Naive thymus-derived CD4-positive, alpha-beta T cell (primary cell): ENCODE measurements at regions of chr17 and their contacts with region 1.

Region 1: GRCh38 chr17:63919311-63919723 is 678 bp upstream of the GH1 start:
- DNase-seq: peak; percentile 53 to 81 (median 68)
- ATAC-seq: peak; percentile 97
- H3K4me3 ChIP-seq: no peak overlapping the region
- H3K4me3 Mint-ChIP-seq: no peak overlapping the region
- H3K27ac ChIP-seq: no peak overlapping the region
- H3K27ac Mint-ChIP-seq: peak overlapping the region in 8 of 9 donors; percentile 3 to 86 (median 8)
- H3K4me1 ChIP-seq: peaks cover 0 to 4% of the 10 kb centered on the region in 2 donors
- H3K4me1 Mint-ChIP-seq: peaks cover 5 to 10% (median 9%) of the 10 kb centered on the region in 7 donors
- H3K27me3 ChIP-seq: no peaks in the 10 kb centered on the region
- H3K27me3 Mint-ChIP-seq: peaks cover 0 to 16% (median 0%) of the 10 kb centered on the region in 5 donors

Region 2: GRCh38 chr17:63931099-63931561 is 11.8 kb after region 1 on chr17:
- CTCF ChIA-PET with region 1: interaction called, 20 read pairs
- POLR2A ChIA-PET with region 1: interaction called, 4 read pairs
- intact Hi-C with region 1: no loop called
- DNase-seq: peak; percentile 29 to 56 (median 48)
- ATAC-seq: peak; percentile 82
- H3K4me3 ChIP-seq: peak overlapping the region; percentile 85
- H3K4me3 Mint-ChIP-seq: peak overlapping the region; percentile 88 to 99 (median 96)
- H3K27ac ChIP-seq: peak overlapping the region; percentile 84
- H3K27ac Mint-ChIP-seq: peak overlapping the region; percentile 87 to 96 (median 93)
- H3K4me1 ChIP-seq: peaks cover 13 to 21% of the 10 kb centered on the region in 2 donors
- H3K4me1 Mint-ChIP-seq: peaks cover 11 to 28% (median 24%) of the 10 kb centered on the region in 7 donors
- H3K27me3 ChIP-seq: no peaks in the 10 kb centered on the region
- H3K27me3 Mint-ChIP-seq: peaks cover 0 to 5% (median 0%) of the 10 kb centered on the region in 5 donors

Region 3: DNA sequence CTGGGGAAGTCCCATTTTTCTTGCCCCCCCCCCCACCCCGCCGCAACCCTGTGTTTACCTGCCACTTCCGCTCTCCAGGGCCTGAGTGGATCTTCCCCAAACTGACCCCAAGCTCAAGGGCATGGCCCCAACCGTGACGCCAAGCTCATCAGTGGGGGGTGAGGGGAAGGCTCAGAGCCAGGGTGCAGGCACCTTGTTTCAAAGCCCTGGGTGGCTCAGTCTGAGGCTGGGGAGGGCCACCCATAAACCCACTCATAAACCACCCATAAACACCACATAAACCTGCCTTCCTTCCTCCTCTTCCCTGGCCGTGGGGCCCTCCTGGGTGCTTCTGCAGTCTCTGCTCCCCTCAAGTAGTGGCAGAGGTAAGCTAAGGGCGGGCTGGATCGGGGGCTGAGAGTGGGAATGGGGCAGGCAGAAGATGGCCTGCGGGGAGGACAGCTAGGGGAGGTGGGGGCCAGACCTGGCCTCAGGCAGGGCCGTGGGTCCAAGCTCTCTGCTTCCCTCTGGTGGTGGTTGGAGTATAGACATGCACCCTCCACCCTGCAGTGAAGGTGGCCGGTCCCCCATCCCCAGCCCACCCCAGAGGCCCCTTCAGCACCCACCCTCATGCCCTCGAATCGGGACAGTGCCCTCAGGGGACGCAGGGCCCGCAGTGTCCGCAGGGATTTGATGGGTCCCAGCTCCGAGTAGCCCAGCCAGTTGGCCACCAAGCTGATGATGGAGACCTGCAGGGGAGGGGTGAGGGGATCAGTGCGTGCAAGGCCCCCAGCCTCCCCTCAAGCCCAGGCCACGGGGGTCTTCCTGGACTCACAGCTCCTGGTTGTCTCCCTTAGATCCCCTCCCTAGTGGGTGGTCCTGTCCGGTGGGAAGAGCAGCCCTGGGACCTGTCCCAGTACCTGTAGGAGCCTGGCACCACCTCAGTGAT is 27.4 kb after region 1 on chr17:
- CTCF ChIA-PET with region 1: interaction called, 37 read pairs
- POLR2A ChIA-PET with region 1: interaction called, 6 read pairs
- intact Hi-C with region 1: loop called (anchors 1 kb)
- DNase-seq: peak; percentile 32 to 71 (median 53)
- ATAC-seq: peak; percentile 87
- H3K4me3 ChIP-seq: peak overlapping the region; percentile 44
- H3K4me3 Mint-ChIP-seq: peak overlapping the region; percentile 59 to 86 (median 73)
- H3K27ac ChIP-seq: no peak overlapping the region
- H3K27ac Mint-ChIP-seq: peak overlapping the region in 5 of 9 donors; percentile 25 to 85 (median 39)
- H3K4me1 ChIP-seq: peaks cover 14 to 17% of the 10 kb centered on the region in 2 donors
- H3K4me1 Mint-ChIP-seq: peaks cover 9 to 19% (median 12%) of the 10 kb centered on the region in 7 donors
- H3K27me3 ChIP-seq: no peaks in the 10 kb centered on the region
- H3K27me3 Mint-ChIP-seq: peaks cover 0 to 7% (median 0%) of the 10 kb centered on the region in 5 donors

Region 4: GRCh38 chr17:63974594-63975192 is 55.4 kb after region 1 on chr17:
- CTCF ChIA-PET with region 1: interaction called, 11 read pairs
- POLR2A ChIA-PET with region 1: no interaction called
- intact Hi-C with region 1: no loop called
- DNase-seq: no peak
- ATAC-seq: no peak
- H3K4me3 ChIP-seq: no peak overlapping the region
- H3K4me3 Mint-ChIP-seq: peak overlapping the region in 1 of 10 donors; percentile 56
- H3K27ac ChIP-seq: no peak overlapping the region
- H3K27ac Mint-ChIP-seq: peak overlapping the region in 1 of 9 donors; percentile 25
- H3K4me1 ChIP-seq: no peaks in the 10 kb centered on the region
- H3K4me1 Mint-ChIP-seq: peaks cover 0 to 17% (median 5%) of the 10 kb centered on the region in 7 donors
- H3K27me3 ChIP-seq: no peaks in the 10 kb centered on the region
- H3K27me3 Mint-ChIP-seq: peaks cover 0 to 23% (median 0%) of the 10 kb centered on the region in 5 donors

Region 5: GRCh38 chr17:63984651-63985386 is 65.5 kb after region 1 on chr17:
- CTCF ChIA-PET with region 1: interaction called, 37 read pairs
- POLR2A ChIA-PET with region 1: interaction called, 3 read pairs
- intact Hi-C with region 1: loop called (anchors 1 kb)
- DNase-seq: peak in 5 of 9 donors; percentile 18 to 62 (median 34)
- ATAC-seq: peak; percentile 92
- H3K4me3 ChIP-seq: no peak overlapping the region
- H3K4me3 Mint-ChIP-seq: peak overlapping the region in 1 of 10 donors; percentile 62
- H3K27ac ChIP-seq: no peak overlapping the region
- H3K27ac Mint-ChIP-seq: peak overlapping the region in 7 of 9 donors; percentile 28 to 85 (median 69)
- H3K4me1 ChIP-seq: peaks cover 4 to 9% of the 10 kb centered on the region in 2 donors
- H3K4me1 Mint-ChIP-seq: peaks cover 8 to 24% (median 15%) of the 10 kb centered on the region in 7 donors
- H3K27me3 ChIP-seq: no peaks in the 10 kb centered on the region
- H3K27me3 Mint-ChIP-seq: no peaks in the 10 kb centered on the region

Region 6: GRCh38 chr17:63998050-63998720 is 78.9 kb after region 1 on chr17 and contains the start of gene PRR29:
- CTCF ChIA-PET with region 1: interaction called, 17 read pairs
- POLR2A ChIA-PET with region 1: no interaction called
- intact Hi-C with region 1: no loop called
- DNase-seq: peak; percentile 65 to 76 (median 71)
- ATAC-seq: peak; percentile 78
- H3K4me3 ChIP-seq: peak within 1 kb of the TSS; percentile 81
- H3K4me3 Mint-ChIP-seq: peak within 1 kb of the TSS; percentile 79 to 96 (median 90)
- H3K27ac ChIP-seq: peak within 1 kb of the TSS; percentile 53
- H3K27ac Mint-ChIP-seq: peak within 1 kb of the TSS; percentile 64 to 86 (median 82)
- H3K4me1 ChIP-seq: peaks cover 20 to 32% of the 10 kb centered on the region in 2 donors
- H3K4me1 Mint-ChIP-seq: peaks cover 30 to 51% (median 44%) of the 10 kb centered on the region in 7 donors
- H3K27me3 ChIP-seq: no peaks in the 10 kb centered on the region
- H3K27me3 Mint-ChIP-seq: peaks cover 0 to 17% (median 0%) of the 10 kb centered on the region in 5 donors
- total RNA-seq, gene PRR29: 0.29 to 2.8 (median 0.40) TPM in 3 of 5 experiments, not detected in the others

Region 7: GRCh38 chr17:64281962-64282727 is 362.8 kb after region 1 on chr17:
- CTCF ChIA-PET with region 1: no interaction called
- POLR2A ChIA-PET with region 1: no interaction called
- intact Hi-C with region 1: loop called (anchors 1 to 5 kb)
- DNase-seq: peak in 8 of 9 donors; percentile 31 to 61 (median 54)
- ATAC-seq: peak; percentile 83
- H3K4me3 ChIP-seq: no peak overlapping the region
- H3K4me3 Mint-ChIP-seq: no peak overlapping the region
- H3K27ac ChIP-seq: no peak overlapping the region
- H3K27ac Mint-ChIP-seq: peak overlapping the region in 1 of 9 donors; percentile 20
- H3K4me1 ChIP-seq: peaks cover 0 to 5% of the 10 kb centered on the region in 2 donors
- H3K4me1 Mint-ChIP-seq: peaks cover 0 to 7% (median 0%) of the 10 kb centered on the region in 7 donors
- H3K27me3 ChIP-seq: no peaks in the 10 kb centered on the region
- H3K27me3 Mint-ChIP-seq: peaks cover 0 to 8% (median 0%) of the 10 kb centered on the region in 5 donors

Region 8: GRCh38 chr17:64459284-64459747 is 540.0 kb after region 1 on chr17:
- CTCF ChIA-PET with region 1: no interaction called
- POLR2A ChIA-PET with region 1: no interaction called
- intact Hi-C with region 1: no loop called
- DNase-seq: no peak
- ATAC-seq: no peak
- H3K4me3 ChIP-seq: no peak overlapping the region
- H3K4me3 Mint-ChIP-seq: no peak overlapping the region
- H3K27ac ChIP-seq: no peak overlapping the region
- H3K27ac Mint-ChIP-seq: no peak overlapping the region
- H3K4me1 ChIP-seq: peaks cover 5 to 10% of the 10 kb centered on the region in 2 donors
- H3K4me1 Mint-ChIP-seq: peaks cover 16 to 40% (median 35%) of the 10 kb centered on the region in 7 donors
- H3K27me3 ChIP-seq: no peaks in the 10 kb centered on the region
- H3K27me3 Mint-ChIP-seq: peaks cover 0 to 5% (median 0%) of the 10 kb centered on the region in 5 donors